CD8-positive, alpha-beta T cell (primary cell): ENCODE measurements at regions of chr7 and their contacts with region 1.

Region 1: GRCh38 chr7:111089822-111090426 is 1.0 kb upstream of the LRRN3 start:
- DNase-seq: peak in 2 of 9 experiments; percentile 57 to 73
- ATAC-seq: peak; percentile 54
- H3K4me3 ChIP-seq: no peak overlapping the region
- H3K4me3 Mint-ChIP-seq: peak overlapping the region; percentile 49
- H3K27ac ChIP-seq: no peak overlapping the region
- H3K27ac Mint-ChIP-seq: peak overlapping the region; percentile 94
- H3K4me1 ChIP-seq: peaks cover 30% of the 10 kb centered on the region
- H3K4me1 Mint-ChIP-seq: peaks cover 43% of the 10 kb centered on the region
- H3K27me3 ChIP-seq: no peaks in the 10 kb centered on the region
- H3K27me3 Mint-ChIP-seq: no peaks in the 10 kb centered on the region
- CTCF ChIP-seq: peak; percentile 92

Region 2: GRCh38 chr7:110881721-110882120 is 208.2 kb before region 1 on chr7:
- CTCF ChIA-PET with region 1: no interaction called
- POLR2A ChIA-PET with region 1: no interaction called
- intact Hi-C with region 1: loop called in 1 of 2 experiments (anchors 5 kb)
- DNase-seq: no peak
- ATAC-seq: no peak
- H3K4me3 ChIP-seq: no peak overlapping the region
- H3K4me3 Mint-ChIP-seq: no peak overlapping the region
- H3K27ac ChIP-seq: no peak overlapping the region
- H3K27ac Mint-ChIP-seq: no peak overlapping the region
- H3K4me1 ChIP-seq: no peaks in the 10 kb centered on the region
- H3K4me1 Mint-ChIP-seq: peaks cover 1% of the 10 kb centered on the region
- H3K27me3 ChIP-seq: no peaks in the 10 kb centered on the region
- H3K27me3 Mint-ChIP-seq: no peaks in the 10 kb centered on the region
- CTCF ChIP-seq: no peak

Region 3: GRCh38 chr7:111012799-111013675 is 76.9 kb before region 1 on chr7:
- CTCF ChIA-PET with region 1: interaction called, 3 read pairs
- POLR2A ChIA-PET with region 1: interaction called, 10 read pairs
- intact Hi-C with region 1: loop called in 1 of 2 experiments (anchors 2 kb)
- DNase-seq: peak in 7 of 9 experiments; percentile 3 to 79 (median 37)
- ATAC-seq: peak; percentile 80
- H3K4me3 ChIP-seq: peak overlapping the region; percentile 16 to 47
- H3K4me3 Mint-ChIP-seq: peak overlapping the region; percentile 74
- H3K27ac ChIP-seq: peak overlapping the region; percentile 58 to 69
- H3K27ac Mint-ChIP-seq: peak overlapping the region; percentile 89
- H3K4me1 ChIP-seq: peaks cover 84% of the 10 kb centered on the region
- H3K4me1 Mint-ChIP-seq: peaks cover 74% of the 10 kb centered on the region
- H3K27me3 ChIP-seq: no peaks in the 10 kb centered on the region
- H3K27me3 Mint-ChIP-seq: no peaks in the 10 kb centered on the region
- CTCF ChIP-seq: no peak

Region 4: DNA sequence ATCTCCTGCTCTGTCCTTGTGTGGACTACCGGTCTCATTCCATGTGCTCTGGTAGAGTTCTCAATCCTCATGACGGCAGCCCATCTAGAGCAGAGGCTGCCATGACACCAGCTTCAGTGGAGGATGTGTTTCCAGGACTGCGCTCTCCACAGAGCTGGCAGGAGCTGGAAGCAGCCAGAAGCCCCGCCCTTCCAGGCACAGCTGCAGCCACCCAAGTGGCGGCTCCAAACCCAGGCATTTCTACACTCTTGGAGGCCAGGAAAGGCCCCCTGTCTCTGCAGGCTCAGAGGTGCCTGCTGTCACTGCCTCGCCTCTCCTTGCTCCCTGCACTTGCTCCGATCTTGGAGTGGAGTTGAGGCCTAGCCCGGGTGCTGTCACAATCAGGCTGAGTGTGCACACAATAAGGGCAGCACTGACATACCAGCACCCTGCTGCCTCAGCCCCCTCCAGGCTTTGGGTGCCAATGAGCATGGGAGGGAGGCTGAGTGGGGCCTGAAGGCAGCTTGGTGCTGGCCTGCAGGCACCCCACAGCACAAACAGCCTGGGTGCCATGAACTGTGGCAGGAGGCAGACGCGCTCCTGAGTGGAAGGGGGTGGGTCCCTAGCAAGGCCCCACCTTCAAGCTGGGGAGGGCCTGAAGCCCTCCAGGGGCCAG is 123.1 kb after region 1 on chr7:
- CTCF ChIA-PET with region 1: no interaction called
- POLR2A ChIA-PET with region 1: no interaction called
- intact Hi-C with region 1: no loop called
- DNase-seq: peak in 2 of 9 experiments; percentile 1 to 9
- ATAC-seq: no peak
- H3K4me3 ChIP-seq: no peak overlapping the region
- H3K4me3 Mint-ChIP-seq: no peak overlapping the region
- H3K27ac ChIP-seq: no peak overlapping the region
- H3K27ac Mint-ChIP-seq: no peak overlapping the region
- H3K4me1 ChIP-seq: no peaks in the 10 kb centered on the region
- H3K4me1 Mint-ChIP-seq: no peaks in the 10 kb centered on the region
- H3K27me3 ChIP-seq: no peaks in the 10 kb centered on the region
- H3K27me3 Mint-ChIP-seq: no peaks in the 10 kb centered on the region
- CTCF ChIP-seq: no peak